T-cell (primary cell): ENCODE measurements at regions of chr5 and their contacts with region 1.

Region 1: DNA sequence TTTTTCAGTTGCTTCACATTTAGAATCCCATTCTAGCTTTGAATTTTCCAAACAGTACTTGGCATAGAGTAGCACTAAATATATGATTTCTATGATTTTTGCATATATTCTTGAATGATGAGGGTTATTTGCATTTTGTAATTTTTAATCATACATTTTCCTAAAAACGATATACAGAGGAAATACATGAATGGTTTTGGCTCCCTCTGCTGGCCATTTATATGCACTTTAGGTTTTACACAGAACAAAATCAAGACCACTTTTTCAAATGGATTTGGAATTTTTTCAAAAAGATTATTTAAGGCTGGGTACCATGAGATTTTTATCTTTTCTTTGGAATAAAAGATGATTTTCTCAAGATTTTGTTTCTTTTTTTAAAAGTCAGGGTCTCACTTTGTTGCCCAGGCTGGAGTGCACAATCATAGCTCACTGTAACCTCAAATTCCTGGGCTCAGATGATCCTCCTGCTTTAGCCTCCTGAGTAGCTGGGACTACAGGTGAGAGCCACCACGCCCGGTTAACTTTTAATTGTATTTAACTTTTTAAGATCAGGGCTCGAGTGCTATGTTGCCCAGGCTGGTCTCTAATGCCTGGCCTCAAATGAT is 16.7 kb upstream of the COMMD10 start:
- DNase-seq: peak in 13 of 35 experiments; percentile 6 to 79 (median 23)
- ATAC-seq: peak in 2 of 4 experiments; percentile 44 to 57
- H3K4me3 ChIP-seq: no peak overlapping the region
- H3K4me3 Mint-ChIP-seq: no peak overlapping the region
- H3K27ac ChIP-seq: no peak overlapping the region
- H3K27ac Mint-ChIP-seq: no peak overlapping the region
- H3K4me1 ChIP-seq: no peaks in the 10 kb centered on the region
- H3K4me1 Mint-ChIP-seq: no peaks in the 10 kb centered on the region
- H3K27me3 ChIP-seq: peaks cover 0 to 3% of the 10 kb centered on the region in 2 experiments
- H3K27me3 Mint-ChIP-seq: peaks cover 21% of the 10 kb centered on the region in 2 donors

Region 2: GRCh38 chr5:115841382-115842088 is 226.6 kb before region 1 on chr5 and contains the starts of genes AP3S1 and ATG12:
- CTCF ChIA-PET with region 1: interaction called in 1 of 2 experiments, 11 read pairs
- POLR2A ChIA-PET with region 1: interaction called in 1 of 2 experiments, 3 read pairs
- DNase-seq: peak; percentile 83 to 94 (median 89)
- ATAC-seq: peak; percentile 85 to 90 (median 89)
- H3K4me3 ChIP-seq: peak within 1 kb of the TSS; percentile 86 to 90
- H3K4me3 Mint-ChIP-seq: peak within 1 kb of the TSS; percentile 96 to 99 (median 99)
- H3K27ac ChIP-seq: peak within 1 kb of the TSS; percentile 92
- H3K27ac Mint-ChIP-seq: peak within 1 kb of the TSS; percentile 94 to 100
- H3K4me1 ChIP-seq: peaks cover 13 to 17% of the 10 kb centered on the region in 2 experiments
- H3K4me1 Mint-ChIP-seq: peaks cover 63 to 71% (median 70%) of the 10 kb centered on the region in 3 donors
- H3K27me3 ChIP-seq: no peaks in the 10 kb centered on the region
- H3K27me3 Mint-ChIP-seq: no peaks in the 10 kb centered on the region
- total RNA-seq, gene AP3S1: 36.4 to 44.2 (median 39.2) TPM
- total RNA-seq, gene ATG12: 55.2 to 61.4 (median 58.9) TPM

Region 3: GRCh38 chr5:116152177-116152576 is 84.0 kb after region 1 on chr5:
- CTCF ChIA-PET with region 1: no interaction called
- POLR2A ChIA-PET with region 1: no interaction called
- DNase-seq: no peak
- ATAC-seq: no peak
- H3K4me3 ChIP-seq: no peak overlapping the region
- H3K4me3 Mint-ChIP-seq: no peak overlapping the region
- H3K27ac ChIP-seq: no peak overlapping the region
- H3K27ac Mint-ChIP-seq: no peak overlapping the region
- H3K4me1 ChIP-seq: no peaks in the 10 kb centered on the region
- H3K4me1 Mint-ChIP-seq: peaks cover 12 to 19% (median 14%) of the 10 kb centered on the region in 3 donors
- H3K27me3 ChIP-seq: no peaks in the 10 kb centered on the region
- H3K27me3 Mint-ChIP-seq: no peaks in the 10 kb centered on the region

Region 4: GRCh38 chr5:116273448-116274207 is 205.5 kb after region 1 on chr5:
- CTCF ChIA-PET with region 1: no interaction called
- POLR2A ChIA-PET with region 1: no interaction called
- DNase-seq: no peak
- ATAC-seq: no peak
- H3K4me3 ChIP-seq: no peak overlapping the region
- H3K4me3 Mint-ChIP-seq: no peak overlapping the region
- H3K27ac ChIP-seq: no peak overlapping the region
- H3K27ac Mint-ChIP-seq: no peak overlapping the region
- H3K4me1 ChIP-seq: no peaks in the 10 kb centered on the region
- H3K4me1 Mint-ChIP-seq: no peaks in the 10 kb centered on the region
- H3K27me3 ChIP-seq: no peaks in the 10 kb centered on the region
- H3K27me3 Mint-ChIP-seq: no peaks in the 10 kb centered on the region